ENCODE measurements at regions of chr15 and their contacts with region 1.

Region 1: GRCh38 chr15:99565299-99566156 is at the start of gene MEF2A:
- DNase-seq: peak; percentile 82
- ATAC-seq: peak; percentile 81
- H3K4me3 ChIP-seq: peak within 1 kb of the TSS; percentile 86 to 97 (median 94)
- H3K27ac ChIP-seq: peak within 1 kb of the TSS; percentile 78
- H3K4me1 ChIP-seq: peaks cover 48% of the 10 kb centered on the region
- H3K27me3 ChIP-seq: peaks cover 0 to 3% of the 10 kb centered on the region in 2 experiments; a peak in 2 of 5 replicates
- CTCF ChIP-seq: no peak
- EP300 ChIP-seq: no peak
- POLR2A ChIP-seq: peak; percentile 64 to 79
- RAD21 ChIP-seq: peak; percentile 40; the same call in 1 of the 2 replicates
- total RNA-seq, gene MEF2A: 15.2 and 17.4 TPM in 2 replicates

Region 2: GRCh38 chr15:98952381-98952803 is 613.1 kb before region 1 on chr15:
- CTCF ChIA-PET with region 1: no interaction called
- POLR2A ChIA-PET with region 1: no interaction called
- in situ Hi-C with region 1: no loop called
- intact Hi-C with region 1: no loop called
- DNase-seq: no peak
- ATAC-seq: no peak
- H3K4me3 ChIP-seq: no peak overlapping the region
- H3K27ac ChIP-seq: no peak overlapping the region
- H3K4me1 ChIP-seq: peaks cover 19% of the 10 kb centered on the region
- H3K27me3 ChIP-seq: no peaks in the 10 kb centered on the region
- CTCF ChIP-seq: no peak
- EP300 ChIP-seq: no peak
- POLR2A ChIP-seq: no peak
- RAD21 ChIP-seq: no peak

Region 3: DNA sequence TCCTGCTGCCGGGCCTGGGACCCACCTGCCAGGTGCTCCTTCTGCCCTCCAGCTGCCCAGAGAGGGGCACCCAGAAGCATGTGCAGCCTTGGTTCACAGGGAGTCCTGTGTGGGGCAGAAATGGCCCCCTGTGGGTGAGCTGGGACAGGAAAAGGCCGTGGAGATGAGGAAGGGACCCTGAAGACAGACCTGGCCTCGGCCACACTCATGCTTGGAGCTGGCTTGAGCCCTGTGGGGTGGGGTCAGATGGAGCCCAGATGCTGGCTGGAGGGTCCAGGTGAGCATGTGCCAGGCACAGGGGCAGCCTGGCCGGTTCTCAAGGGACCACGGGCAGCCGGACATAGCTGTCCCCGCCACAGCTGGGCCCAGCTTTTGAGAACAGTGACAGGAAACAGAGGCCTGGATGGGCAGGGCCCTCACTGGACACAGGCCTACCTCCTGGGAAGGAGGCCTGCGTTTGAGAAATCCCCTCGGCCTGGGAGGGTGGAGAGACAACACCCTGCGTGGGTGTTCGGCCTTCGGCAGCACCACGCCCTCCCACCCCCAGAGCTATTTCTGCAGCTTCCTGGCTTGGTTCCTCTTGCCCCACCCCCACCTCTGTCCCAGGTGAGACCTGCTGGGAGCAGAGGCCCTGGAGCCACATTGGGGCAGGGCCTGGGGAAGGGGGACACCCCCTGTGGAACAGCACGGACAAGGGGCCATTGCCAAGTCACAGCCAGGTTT is 132.3 kb before region 1 on chr15:
- CTCF ChIA-PET with region 1: no interaction called
- POLR2A ChIA-PET with region 1: no interaction called
- in situ Hi-C with region 1: loop called (anchors 10 kb)
- intact Hi-C with region 1: no loop called
- DNase-seq: no peak
- ATAC-seq: peak; percentile 46
- H3K4me3 ChIP-seq: peak overlapping the region in 1 of 3 experiments; percentile 28; a peak in 1 of 6 replicates
- H3K27ac ChIP-seq: no peak overlapping the region
- H3K4me1 ChIP-seq: peaks cover 41% of the 10 kb centered on the region
- H3K27me3 ChIP-seq: peaks cover 9 to 72% of the 10 kb centered on the region in 2 experiments
- CTCF ChIP-seq: no peak
- EP300 ChIP-seq: no peak
- POLR2A ChIP-seq: no peak
- RAD21 ChIP-seq: no peak

Region 4: DNA sequence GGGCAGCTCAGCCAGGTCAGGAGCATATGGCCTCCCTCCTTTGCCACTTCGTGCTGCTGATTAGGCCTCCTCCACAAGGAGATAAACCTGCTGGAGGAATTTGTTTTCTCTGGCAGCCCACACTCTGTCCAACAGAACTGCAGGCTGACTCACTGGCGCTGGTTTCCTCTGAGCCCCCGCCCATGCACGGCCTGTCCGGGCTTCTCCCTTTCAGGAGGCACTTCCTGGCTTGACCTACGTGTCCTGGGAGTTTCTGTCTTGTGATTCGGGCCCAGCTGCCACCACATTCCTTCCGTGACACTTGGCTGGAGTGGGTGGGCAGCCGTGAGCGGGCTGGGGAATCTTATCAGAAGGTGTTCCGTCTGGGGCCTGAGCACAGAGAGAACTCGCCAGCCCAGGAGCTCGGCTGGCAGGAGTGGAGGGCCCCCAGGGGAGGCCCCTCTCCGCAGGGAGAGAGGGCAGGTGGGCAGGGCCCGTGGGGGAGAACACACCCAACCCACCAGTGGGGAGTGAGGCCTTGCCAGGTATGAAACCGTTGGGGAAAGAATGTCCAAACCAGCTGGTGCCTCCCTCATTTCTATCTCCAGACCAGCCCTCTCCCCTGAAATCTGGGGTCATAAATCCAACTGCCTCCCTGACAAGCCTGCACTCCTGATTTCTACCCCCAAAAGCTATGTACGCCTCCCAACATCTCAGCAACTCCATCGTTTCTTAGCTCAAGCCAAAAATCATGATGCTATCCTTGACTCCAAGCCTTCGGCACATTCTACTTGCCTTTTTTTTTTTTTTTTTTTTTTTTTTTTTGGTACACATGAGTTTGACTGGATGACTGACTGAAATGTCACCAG is 110.4 kb before region 1 on chr15:
- CTCF ChIA-PET with region 1: no interaction called
- POLR2A ChIA-PET with region 1: no interaction called
- in situ Hi-C with region 1: no loop called
- intact Hi-C with region 1: loop called (anchors 5 kb)
- DNase-seq: peak; percentile 49
- ATAC-seq: peak; percentile 87
- H3K4me3 ChIP-seq: peak overlapping the region; percentile 48 to 75 (median 71)
- H3K27ac ChIP-seq: no peak overlapping the region
- H3K4me1 ChIP-seq: peaks cover 45% of the 10 kb centered on the region
- H3K27me3 ChIP-seq: peaks cover 3 to 40% of the 10 kb centered on the region in 2 experiments; a peak in 4 of 5 replicates
- CTCF ChIP-seq: no peak
- EP300 ChIP-seq: no peak
- POLR2A ChIP-seq: no peak
- RAD21 ChIP-seq: no peak

Region 5: GRCh38 chr15:99552111-99552510 is 13.4 kb before region 1 on chr15:
- CTCF ChIA-PET with region 1: no interaction called
- POLR2A ChIA-PET with region 1: no interaction called
- in situ Hi-C with region 1: no loop called
- intact Hi-C with region 1: loop called (anchors 1 kb)
- DNase-seq: no peak
- ATAC-seq: no peak
- H3K4me3 ChIP-seq: no peak overlapping the region
- H3K27ac ChIP-seq: no peak overlapping the region
- H3K4me1 ChIP-seq: no peaks in the 10 kb centered on the region
- H3K27me3 ChIP-seq: peaks cover 0 to 14% of the 10 kb centered on the region in 2 experiments; a peak in 2 of 5 replicates
- CTCF ChIP-seq: no peak
- EP300 ChIP-seq: no peak
- POLR2A ChIP-seq: no peak
- RAD21 ChIP-seq: no peak

Region 6: DNA sequence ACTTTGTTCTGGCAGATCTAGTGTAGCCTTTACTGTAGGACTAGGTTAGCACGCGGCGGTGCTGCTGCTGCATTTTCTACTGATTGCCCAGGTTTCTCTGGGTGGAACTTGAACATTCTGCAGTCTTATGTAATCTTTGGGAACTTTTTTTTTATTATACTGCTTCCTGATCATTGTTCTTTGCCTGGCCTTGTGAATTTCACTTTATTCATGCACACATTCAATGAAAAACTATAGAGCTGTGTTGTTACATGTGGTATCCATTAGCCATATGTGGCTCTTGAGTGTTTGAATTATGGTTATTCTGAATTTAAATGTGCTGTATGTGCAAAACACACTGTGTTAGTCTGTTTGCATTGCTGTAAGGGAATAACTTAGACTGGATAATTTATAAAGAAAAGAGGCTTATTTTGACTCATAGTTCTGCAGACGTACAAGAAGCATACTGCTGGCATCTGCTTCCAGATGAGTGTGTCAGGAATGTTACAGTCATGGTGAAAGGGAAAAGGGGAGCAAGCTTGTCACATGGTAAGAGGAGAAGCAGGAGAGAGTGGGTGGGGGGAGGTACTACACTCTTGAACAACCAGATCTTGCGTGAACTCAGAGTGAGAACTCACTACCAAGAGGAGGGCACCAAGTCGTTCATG is 26.7 kb after region 1 on chr15:
- CTCF ChIA-PET with region 1: no interaction called
- POLR2A ChIA-PET with region 1: no interaction called
- in situ Hi-C with region 1: no loop called
- intact Hi-C with region 1: no loop called
- DNase-seq: no peak
- ATAC-seq: no peak
- H3K4me3 ChIP-seq: no peak overlapping the region
- H3K27ac ChIP-seq: no peak overlapping the region
- H3K4me1 ChIP-seq: peaks cover 19% of the 10 kb centered on the region
- H3K27me3 ChIP-seq: no peaks in the 10 kb centered on the region
- CTCF ChIP-seq: no peak
- EP300 ChIP-seq: no peak
- POLR2A ChIP-seq: no peak
- RAD21 ChIP-seq: no peak

Region 7: GRCh38 chr15:99630607-99631131 is 65.1 kb after region 1 on chr15:
- CTCF ChIA-PET with region 1: no interaction called
- POLR2A ChIA-PET with region 1: no interaction called
- in situ Hi-C with region 1: no loop called
- intact Hi-C with region 1: no loop called
- DNase-seq: no peak
- ATAC-seq: no peak
- H3K4me3 ChIP-seq: no peak overlapping the region
- H3K27ac ChIP-seq: no peak overlapping the region
- H3K4me1 ChIP-seq: peaks cover 35% of the 10 kb centered on the region
- H3K27me3 ChIP-seq: no peaks in the 10 kb centered on the region
- CTCF ChIP-seq: no peak
- EP300 ChIP-seq: no peak
- POLR2A ChIP-seq: no peak
- RAD21 ChIP-seq: no peak